Gastrocnemius medialis (tissue), 4 donors: ENCODE measurements at regions of chr10 and their contacts with region 1.

Region 1: DNA sequence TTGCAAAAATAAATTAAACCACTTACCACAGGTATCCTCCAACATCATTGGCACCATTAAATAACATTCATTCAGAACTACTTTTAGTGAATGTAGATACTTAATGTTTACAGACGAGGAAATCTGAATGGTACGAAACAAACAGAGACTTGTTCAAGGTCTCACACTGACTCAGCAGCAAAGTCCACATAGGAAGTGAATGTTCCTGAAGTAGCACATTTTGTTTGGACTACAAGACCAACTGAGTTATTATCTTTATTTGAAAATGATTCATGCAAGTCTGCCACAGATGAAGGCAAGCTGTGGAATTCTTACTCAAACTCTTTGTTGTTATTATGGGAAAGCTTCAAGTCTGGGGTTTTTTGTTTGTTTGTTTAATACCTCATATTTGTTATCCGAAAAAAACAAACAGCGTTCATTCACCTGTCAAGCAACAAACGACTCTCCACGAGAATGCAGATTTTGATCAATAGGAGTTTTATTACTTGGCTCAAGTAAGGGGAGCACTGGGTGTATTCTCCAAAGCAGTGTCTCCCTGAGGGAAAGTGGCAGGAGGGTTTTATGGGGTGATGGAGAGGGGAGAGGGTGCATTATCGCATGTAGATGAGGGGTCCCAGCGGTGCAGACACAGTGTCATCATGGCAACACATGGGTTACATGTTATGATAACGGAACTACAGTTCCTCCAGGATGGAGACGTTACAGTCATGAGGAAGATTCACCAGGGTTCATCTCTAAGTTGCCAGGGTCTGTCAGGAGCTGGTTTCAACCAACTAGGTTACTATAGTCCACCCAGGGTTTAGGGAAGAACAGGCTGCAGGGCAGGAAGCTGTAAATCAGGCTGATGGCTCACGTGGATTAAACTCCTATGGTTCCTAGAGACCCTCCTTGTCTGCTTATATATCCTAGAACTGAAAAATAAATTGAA is 147.7 kb upstream of the AKR1E2 start:
- DNase-seq: no peak
- ATAC-seq: peak; percentile 57 to 85
- H3K4me3 ChIP-seq: no peak overlapping the region
- H3K27ac ChIP-seq: peak overlapping the region; percentile 69 to 96 (median 93)
- H3K4me1 ChIP-seq: peaks cover 25 to 32% of the 10 kb centered on the region in 2 donors
- H3K27me3 ChIP-seq: no peaks in the 10 kb centered on the region
- CTCF ChIP-seq: no peak
- POLR2A ChIP-seq: no peak

Region 2: GRCh38 chr10:3805791-3806461 is 872.4 kb before region 1 on chr10:
- in situ Hi-C with region 1: loop called in 2 of 4 experiments (anchors 10 to 25 kb)
- intact Hi-C with region 1: loop called (anchors 5 kb)
- DNase-seq: peak in 1 of 2 donors; percentile 66
- ATAC-seq: peak in 1 of 2 donors; percentile 7
- H3K4me3 ChIP-seq: peak overlapping the region; percentile 5 to 23 (median 12)
- H3K27ac ChIP-seq: peak overlapping the region; percentile 85 to 96 (median 90)
- H3K4me1 ChIP-seq: peaks cover 72 to 78% of the 10 kb centered on the region in 2 donors
- H3K27me3 ChIP-seq: no peaks in the 10 kb centered on the region
- CTCF ChIP-seq: no peak
- POLR2A ChIP-seq: no peak

Region 3: GRCh38 chr10:4719036-4719435 is 40.7 kb after region 1 on chr10:
- in situ Hi-C with region 1: no loop called
- intact Hi-C with region 1: loop called (anchors 2 kb)
- DNase-seq: no peak
- ATAC-seq: peak; percentile 28 to 44
- H3K4me3 ChIP-seq: no peak overlapping the region
- H3K27ac ChIP-seq: peak overlapping the region in 1 of 4 donors; percentile 30
- H3K4me1 ChIP-seq: peaks cover 19 to 34% of the 10 kb centered on the region in 2 donors
- H3K27me3 ChIP-seq: no peaks in the 10 kb centered on the region
- CTCF ChIP-seq: no peak
- POLR2A ChIP-seq: no peak

Region 4: DNA sequence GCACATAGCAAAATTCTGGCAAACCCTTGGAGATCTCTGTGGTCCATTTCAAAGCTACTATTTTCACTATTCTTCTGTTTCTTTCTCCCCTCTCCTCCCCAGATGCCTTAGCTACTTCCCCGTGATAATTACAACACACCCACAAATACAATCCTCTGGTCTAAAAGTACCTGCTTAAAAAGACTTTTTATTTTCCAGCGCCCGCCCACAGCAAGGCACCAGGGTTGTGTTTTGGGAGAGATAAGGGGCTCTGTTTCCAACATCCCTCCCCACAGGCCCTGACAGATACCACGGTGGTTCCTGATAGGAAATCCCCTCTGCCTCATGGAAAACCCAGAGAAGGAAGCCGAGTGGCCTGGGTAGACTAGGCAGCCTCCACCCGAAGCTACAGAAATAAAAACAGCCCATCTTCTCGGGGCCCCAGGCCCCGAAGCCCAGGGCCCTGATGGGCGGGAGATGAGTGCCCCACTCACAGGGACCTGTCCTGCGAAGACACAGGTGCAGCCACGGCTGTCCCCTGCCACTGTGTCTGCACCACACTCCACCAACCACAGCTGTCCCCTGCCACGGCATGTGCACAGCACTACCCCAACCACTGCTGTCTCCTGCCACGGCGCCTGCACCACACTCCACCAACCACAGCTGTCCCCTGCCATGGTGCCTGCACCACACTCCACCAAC is 801.3 kb after region 1 on chr10:
- in situ Hi-C with region 1: no loop called
- intact Hi-C with region 1: no loop called
- DNase-seq: no peak
- ATAC-seq: no peak
- H3K4me3 ChIP-seq: no peak overlapping the region
- H3K27ac ChIP-seq: no peak overlapping the region
- H3K4me1 ChIP-seq: no peaks in the 10 kb centered on the region
- H3K27me3 ChIP-seq: no peaks in the 10 kb centered on the region
- CTCF ChIP-seq: no peak
- POLR2A ChIP-seq: no peak

Region 5: GRCh38 chr10:5832936-5833335 is 1154.6 kb after region 1 on chr10:
- in situ Hi-C with region 1: no loop called
- intact Hi-C with region 1: no loop called
- DNase-seq: no peak
- ATAC-seq: no peak
- H3K4me3 ChIP-seq: no peak overlapping the region
- H3K27ac ChIP-seq: no peak overlapping the region
- H3K4me1 ChIP-seq: no peaks in the 10 kb centered on the region
- H3K27me3 ChIP-seq: no peaks in the 10 kb centered on the region
- CTCF ChIP-seq: no peak
- POLR2A ChIP-seq: no peak